ENCODE measurements at regions of chr1 and their contacts with region 1.

Region 1: GRCh38 chr1:42081475-42081874 is 71.7 kb upstream of the GUCA2B start:
- DNase-seq: no peak
- ATAC-seq: no peak
- H3K4me3 Mint-ChIP-seq: no peak overlapping the region
- H3K27ac Mint-ChIP-seq: no peak overlapping the region
- H3K4me1 Mint-ChIP-seq: peaks cover 2% of the 10 kb centered on the region
- H3K27me3 Mint-ChIP-seq: peaks cover 16% of the 10 kb centered on the region

Region 2: GRCh38 chr1:41599912-41600311 is 481.6 kb before region 1 on chr1:
- CTCF ChIA-PET with region 1: no interaction called
- POLR2A ChIA-PET with region 1: interaction called, 11 read pairs
- intact Hi-C with region 1: no loop called
- DNase-seq: no peak
- ATAC-seq: no peak
- H3K4me3 Mint-ChIP-seq: no peak overlapping the region
- H3K27ac Mint-ChIP-seq: peak overlapping the region; percentile 53
- H3K4me1 Mint-ChIP-seq: peaks cover 56% of the 10 kb centered on the region
- H3K27me3 Mint-ChIP-seq: no peaks in the 10 kb centered on the region

Region 3: DNA sequence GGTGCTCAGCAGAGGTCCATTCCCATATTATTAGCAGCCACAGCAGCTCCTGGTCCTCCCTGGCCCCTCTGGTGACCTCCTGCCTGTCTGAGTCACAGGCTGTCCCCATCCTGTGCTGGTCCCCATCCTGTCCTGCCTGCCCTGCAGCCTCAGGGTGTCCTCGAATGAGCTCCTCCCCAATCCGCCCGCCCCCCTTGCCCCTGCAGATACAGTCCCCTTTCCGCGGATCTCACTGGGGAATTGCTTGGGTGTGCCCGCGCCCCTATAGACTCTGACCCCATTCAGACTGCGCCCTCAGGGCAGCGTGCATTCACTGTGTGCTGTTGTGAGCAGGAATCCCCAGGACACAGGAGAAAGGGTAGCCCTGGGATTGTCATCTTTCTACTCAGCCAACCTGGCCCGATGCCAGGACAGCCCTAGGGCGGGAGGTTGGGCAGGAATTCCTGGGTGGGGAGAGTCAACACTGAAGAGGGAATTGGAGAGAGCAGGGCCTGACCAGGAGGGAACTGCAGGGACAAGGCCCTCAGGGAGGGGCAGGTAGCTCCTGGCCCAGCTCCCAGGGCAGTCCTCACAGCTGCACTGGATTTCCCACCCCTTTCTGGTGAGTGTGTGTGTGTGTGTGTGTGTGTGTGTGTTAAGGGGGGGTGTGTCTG is 84.2 kb after region 1 on chr1:
- CTCF ChIA-PET with region 1: no interaction called
- POLR2A ChIA-PET with region 1: no interaction called
- intact Hi-C with region 1: no loop called
- DNase-seq: no peak
- ATAC-seq: no peak
- H3K4me3 Mint-ChIP-seq: no peak overlapping the region
- H3K27ac Mint-ChIP-seq: no peak overlapping the region
- H3K4me1 Mint-ChIP-seq: no peaks in the 10 kb centered on the region
- H3K27me3 Mint-ChIP-seq: peaks cover under 1% of the 10 kb centered on the region